ENCODE measurements at regions of chr12 and their contacts with region 1.

Region 1: GRCh38 chr12:47963340-47964040 is at the start of gene TMEM106C:
- DNase-seq: peak; percentile 87
- H3K4me3 Mint-ChIP-seq: peak within 1 kb of the TSS; percentile 98
- H3K27ac Mint-ChIP-seq: peak within 1 kb of the TSS; percentile 66
- H3K4me1 Mint-ChIP-seq: peaks cover 15% of the 10 kb centered on the region
- H3K27me3 Mint-ChIP-seq: no peaks in the 10 kb centered on the region
- CTCF ChIP-seq: peak; percentile 95
- total RNA-seq, gene TMEM106C: 39.0 and 50.0 TPM in 2 replicates

Region 2: GRCh38 chr12:47949441-47950308 is 13.8 kb before region 1 on chr12:
- CTCF ChIA-PET with region 1: interaction called, 40 read pairs
- POLR2A ChIA-PET with region 1: interaction called, 12 read pairs
- intact Hi-C with region 1: no loop called
- DNase-seq: peak; percentile 88
- H3K4me3 Mint-ChIP-seq: no peak overlapping the region
- H3K27ac Mint-ChIP-seq: no peak overlapping the region
- H3K4me1 Mint-ChIP-seq: peaks cover 45% of the 10 kb centered on the region
- H3K27me3 Mint-ChIP-seq: no peaks in the 10 kb centered on the region
- CTCF ChIP-seq: peak; percentile 82

Region 3: GRCh38 chr12:47977046-47977766 is 13.7 kb after region 1 on chr12:
- CTCF ChIA-PET with region 1: interaction called, 18 read pairs
- POLR2A ChIA-PET with region 1: interaction called, 4 read pairs
- intact Hi-C with region 1: no loop called
- DNase-seq: peak; percentile 18
- H3K4me3 Mint-ChIP-seq: no peak overlapping the region
- H3K27ac Mint-ChIP-seq: peak overlapping the region; percentile 29
- H3K4me1 Mint-ChIP-seq: peaks cover 7% of the 10 kb centered on the region
- H3K27me3 Mint-ChIP-seq: peaks cover 11% of the 10 kb centered on the region
- CTCF ChIP-seq: no peak

Region 4: GRCh38 chr12:48189331-48190125 is 226.0 kb after region 1 on chr12:
- CTCF ChIA-PET with region 1: interaction called, 5 read pairs
- POLR2A ChIA-PET with region 1: no interaction called
- intact Hi-C with region 1: loop called (anchors 5 kb)
- DNase-seq: peak; percentile 78
- H3K4me3 Mint-ChIP-seq: no peak overlapping the region
- H3K27ac Mint-ChIP-seq: no peak overlapping the region
- H3K4me1 Mint-ChIP-seq: peaks cover 5% of the 10 kb centered on the region
- H3K27me3 Mint-ChIP-seq: peaks cover 67% of the 10 kb centered on the region
- CTCF ChIP-seq: peak; percentile 78

Measured in MCF 10A (cell line).